ENCODE measurements at regions of chr1 and their contacts with region 1.

Region 1: GRCh38 chr1:8712413-8713231 is 104.8 kb downstream of the RERE start:
- DNase-seq: no peak

Region 2: DNA sequence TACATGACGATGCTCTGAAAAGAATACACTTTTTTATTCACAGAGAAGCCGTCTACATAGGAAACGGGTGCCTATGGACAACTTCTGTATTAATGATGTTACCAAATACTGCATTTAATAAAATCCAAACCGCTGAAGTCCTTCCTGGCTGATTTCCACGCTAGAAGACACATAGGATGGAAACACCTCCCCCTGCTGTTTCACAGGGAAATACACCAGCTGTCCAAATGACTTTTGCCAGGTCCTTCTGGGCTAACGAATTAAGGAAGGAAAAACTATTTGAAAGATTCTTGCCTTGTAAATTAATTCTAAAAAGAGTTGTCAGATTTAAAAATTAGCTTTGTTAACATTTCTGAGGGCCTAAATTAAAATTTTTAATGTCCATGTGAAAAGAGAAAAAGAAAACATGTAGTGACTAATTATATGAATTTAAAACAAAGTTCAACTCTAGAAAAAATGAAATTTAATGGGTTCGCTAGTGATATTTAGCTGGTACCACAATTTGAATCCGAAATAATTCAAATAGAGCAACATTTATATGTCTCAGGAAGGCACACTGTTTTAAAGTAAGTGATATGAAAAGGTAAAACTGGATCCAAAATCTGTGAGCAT is 41.2 kb before region 1 on chr1:
- intact Hi-C with region 1: loop called (anchors 5 kb)
- DNase-seq: no peak